ENCODE measurements at regions of chr16 and their contacts with region 1.

Region 1: DNA sequence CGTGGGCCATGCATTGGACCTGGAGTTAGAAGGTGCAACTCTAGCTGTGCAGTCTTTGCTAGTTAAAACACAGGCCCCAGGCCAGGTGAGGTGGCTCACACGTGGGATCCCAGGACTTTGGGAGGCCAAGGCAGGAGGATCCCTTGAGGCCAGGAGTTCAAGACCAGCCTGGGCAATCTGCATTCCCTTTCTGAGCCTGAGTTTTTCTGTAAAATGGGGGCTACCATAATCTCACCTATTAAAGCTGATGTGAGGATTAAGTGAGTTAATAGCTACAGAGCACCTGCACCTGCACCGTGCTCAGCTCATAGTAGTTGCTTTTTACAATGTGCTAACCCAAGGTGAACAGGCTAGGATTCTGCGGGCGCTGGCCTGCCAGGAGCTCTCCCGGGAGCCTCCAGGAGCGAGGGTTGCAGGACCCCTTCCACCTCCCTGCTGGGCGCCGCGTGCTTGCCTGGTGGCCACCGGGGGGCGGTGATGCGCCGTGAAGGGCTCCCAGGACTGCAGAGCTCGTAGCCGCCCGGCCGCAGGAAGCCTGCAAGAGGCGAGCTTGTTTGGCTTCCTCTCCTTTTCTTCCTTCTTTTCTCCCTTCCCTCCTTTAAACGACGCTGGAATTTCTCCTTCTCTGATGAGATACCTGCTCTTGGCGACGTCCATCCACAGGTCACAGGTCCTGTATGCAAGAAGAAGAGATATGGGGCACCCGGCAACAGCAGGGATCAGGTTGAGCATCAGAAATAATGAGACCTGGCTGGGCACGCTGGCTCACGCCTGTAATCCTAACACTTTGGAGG is 51.3 kb downstream of the ZFP90 start:
- DNase-seq: peak; percentile 31
- H3K4me3 Mint-ChIP-seq: no peak overlapping the region
- H3K27ac Mint-ChIP-seq: no peak overlapping the region
- H3K4me1 Mint-ChIP-seq: peaks cover 2% of the 10 kb centered on the region
- H3K27me3 Mint-ChIP-seq: peaks cover 3% of the 10 kb centered on the region

Region 2: GRCh38 chr16:68264128-68265077 is 326.0 kb before region 1 on chr16 and contains the start of gene SLC7A6:
- intact Hi-C with region 1: no loop called
- DNase-seq: peak; percentile 79
- H3K4me3 Mint-ChIP-seq: peak within 1 kb of the TSS; percentile 93
- H3K27ac Mint-ChIP-seq: peak within 1 kb of the TSS; percentile 97
- H3K4me1 Mint-ChIP-seq: peaks cover 36% of the 10 kb centered on the region
- H3K27me3 Mint-ChIP-seq: no peaks in the 10 kb centered on the region
- total RNA-seq, gene SLC7A6: 107 and 108 TPM in 2 replicates

Region 3: DNA sequence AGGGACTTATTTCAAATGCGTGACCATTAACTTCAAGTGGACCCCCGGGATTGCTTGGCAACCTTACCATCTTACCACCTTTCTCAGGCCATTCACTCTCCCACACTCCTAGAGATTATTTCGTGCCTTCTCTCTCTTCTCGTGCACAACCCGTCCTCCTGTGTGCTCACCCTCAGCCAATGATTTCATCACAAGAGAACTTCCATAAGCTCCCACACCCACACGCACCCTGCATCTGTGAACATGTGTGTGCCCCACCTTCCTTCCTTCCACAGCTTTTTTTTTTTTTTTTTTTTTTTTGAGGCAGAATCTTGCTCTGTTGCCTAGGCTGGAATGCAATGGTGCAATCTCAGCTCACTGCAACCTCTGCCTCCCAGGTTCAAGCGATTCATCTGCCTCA is 27.3 kb after region 1 on chr16:
- intact Hi-C with region 1: no loop called
- DNase-seq: no peak
- H3K4me3 Mint-ChIP-seq: no peak overlapping the region
- H3K27ac Mint-ChIP-seq: no peak overlapping the region
- H3K4me1 Mint-ChIP-seq: no peaks in the 10 kb centered on the region
- H3K27me3 Mint-ChIP-seq: no peaks in the 10 kb centered on the region

Region 4: GRCh38 chr16:68636064-68636560 is 45.7 kb after region 1 on chr16:
- intact Hi-C with region 1: no loop called
- DNase-seq: no peak
- H3K4me3 Mint-ChIP-seq: no peak overlapping the region
- H3K27ac Mint-ChIP-seq: no peak overlapping the region
- H3K4me1 Mint-ChIP-seq: peaks cover 4% of the 10 kb centered on the region
- H3K27me3 Mint-ChIP-seq: peaks cover 5% of the 10 kb centered on the region

Region 5: DNA sequence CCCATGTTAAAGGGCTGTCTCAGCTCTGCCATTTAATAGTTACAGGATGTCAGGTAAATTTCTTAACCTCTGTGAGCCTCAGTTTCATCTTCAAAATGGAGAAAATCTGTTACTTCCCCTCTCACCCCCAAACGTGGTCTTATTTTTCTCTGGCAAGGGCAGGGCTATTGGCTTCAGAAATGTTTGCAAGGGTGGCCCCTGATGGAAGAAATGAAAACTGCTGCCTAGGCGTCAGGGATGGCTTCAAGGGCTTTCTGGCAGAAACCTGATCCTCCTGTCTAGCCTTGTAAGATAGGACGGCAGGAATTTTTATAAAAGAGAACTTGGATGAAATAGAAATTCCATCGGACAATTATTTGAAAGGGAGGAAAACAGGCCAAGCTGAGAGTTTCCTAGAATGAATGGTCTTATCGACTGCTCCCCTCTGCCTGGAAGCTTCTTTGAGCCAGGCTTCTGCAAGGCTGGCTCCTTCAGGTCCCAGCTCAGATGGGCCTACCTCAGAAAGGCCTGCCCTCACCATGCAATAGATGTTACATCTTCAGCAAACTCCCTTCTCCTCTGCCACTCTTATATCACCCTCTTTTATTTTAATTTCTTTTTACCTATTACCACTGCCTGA is 210.0 kb after region 1 on chr16:
- intact Hi-C with region 1: loop called (anchors 2 kb)
- DNase-seq: peak; percentile 34
- H3K4me3 Mint-ChIP-seq: no peak overlapping the region
- H3K27ac Mint-ChIP-seq: no peak overlapping the region
- H3K4me1 Mint-ChIP-seq: peaks cover 2% of the 10 kb centered on the region
- H3K27me3 Mint-ChIP-seq: peaks cover 9% of the 10 kb centered on the region